ENCODE measurements at regions of chr2 and their contacts with region 1.

Region 1: DNA sequence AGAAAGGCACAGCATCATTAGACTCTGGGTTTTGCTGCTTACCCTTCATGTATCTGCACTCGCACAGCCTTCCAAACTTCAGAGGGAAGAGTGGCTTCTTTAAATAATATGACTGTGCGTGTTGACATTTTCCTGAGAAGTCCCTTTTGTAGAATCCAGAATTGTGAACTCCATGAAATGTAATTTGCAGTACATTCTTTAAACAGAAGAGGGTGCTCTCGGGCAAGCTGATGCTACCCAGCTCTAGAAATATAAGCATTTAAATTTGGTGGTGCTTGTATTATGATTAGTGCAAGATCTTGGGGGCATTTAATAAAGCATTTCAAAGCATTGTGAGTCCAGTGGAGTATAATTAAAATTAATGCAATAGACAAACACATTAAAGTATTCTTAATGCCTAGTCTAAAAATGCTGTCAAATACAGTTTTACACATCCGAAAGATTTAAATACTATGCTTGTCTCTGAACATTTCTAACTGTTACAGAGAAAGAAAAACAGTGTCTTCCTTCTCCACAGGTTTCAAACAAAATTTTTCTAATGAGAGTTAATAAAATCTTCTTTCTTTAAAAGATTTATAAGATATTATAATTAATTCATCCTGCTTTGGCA is 17.3 kb upstream of the GTF2A1L start:
- H3K4me3 Mint-ChIP-seq: no peak overlapping the region
- H3K27ac Mint-ChIP-seq: no peak overlapping the region
- H3K4me1 Mint-ChIP-seq: no peaks in the 10 kb centered on the region
- H3K27me3 Mint-ChIP-seq: no peaks in the 10 kb centered on the region

Region 2: DNA sequence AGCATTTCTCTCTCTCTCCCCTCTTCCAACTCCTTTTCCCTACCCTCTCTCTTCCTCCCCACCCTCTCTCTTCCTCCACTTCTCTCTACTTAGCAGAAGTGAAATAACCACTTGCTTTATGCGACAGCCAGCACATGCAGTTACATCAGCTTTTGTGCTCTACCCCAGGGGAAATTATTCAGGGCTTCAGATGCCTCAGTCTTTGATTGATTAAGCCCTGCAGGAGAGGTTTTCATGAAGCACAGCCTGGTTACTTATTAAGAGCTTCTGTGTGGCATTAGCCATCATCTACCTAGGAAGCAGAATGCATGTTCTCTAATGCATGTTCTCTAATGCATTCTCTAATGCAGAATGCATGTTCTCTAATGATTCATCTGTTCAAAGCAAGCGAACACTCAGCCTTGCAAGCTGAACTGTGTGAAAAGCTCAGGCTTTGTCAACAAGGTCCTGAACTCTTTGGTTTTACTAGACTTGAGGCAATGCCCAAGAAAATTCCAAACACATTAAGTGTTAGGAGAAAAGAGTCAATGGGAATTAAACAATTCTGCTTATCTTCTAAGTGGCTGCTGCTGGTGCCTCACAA is 99.1 kb after region 1 on chr2:
- intact Hi-C with region 1: no loop called
- H3K4me3 Mint-ChIP-seq: no peak overlapping the region
- H3K27ac Mint-ChIP-seq: no peak overlapping the region
- H3K4me1 Mint-ChIP-seq: no peaks in the 10 kb centered on the region
- H3K27me3 Mint-ChIP-seq: no peaks in the 10 kb centered on the region

Region 3: DNA sequence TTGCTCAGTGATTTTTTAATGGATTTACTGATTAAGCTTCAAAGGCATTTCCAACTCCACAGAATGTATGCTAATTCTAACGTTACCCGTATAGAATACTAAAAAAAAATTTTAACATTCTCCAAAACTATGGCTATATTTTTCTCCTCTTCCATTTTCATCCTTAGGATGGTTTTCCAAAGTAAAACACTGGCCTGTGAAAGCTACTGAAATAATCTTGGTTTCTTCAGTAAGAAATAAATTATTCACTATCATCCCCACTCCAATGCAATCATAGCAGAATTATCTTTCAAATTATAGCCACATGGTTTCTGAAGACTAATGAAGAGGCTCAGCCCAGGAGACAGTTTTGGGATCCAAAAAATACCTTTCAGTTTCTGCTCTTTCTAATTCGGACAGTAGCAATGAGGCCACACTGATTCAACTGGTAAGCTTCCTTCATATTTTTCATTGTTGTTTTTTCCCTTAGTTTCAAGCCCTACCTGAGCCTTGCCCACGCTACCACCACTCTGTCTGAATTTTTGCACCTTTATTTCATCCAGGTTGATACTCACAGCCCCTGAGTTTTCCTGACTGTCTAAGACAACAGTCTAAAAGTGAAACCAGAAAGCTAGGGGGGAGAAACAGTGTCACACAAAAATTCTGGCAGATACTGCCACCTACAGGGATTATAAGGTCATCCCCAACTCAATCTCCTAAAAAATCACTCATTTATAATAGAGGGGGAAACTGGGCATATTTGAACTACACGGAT is 1543.7 kb after region 1 on chr2:
- intact Hi-C with region 1: loop called (anchors 5 kb)
- H3K4me3 Mint-ChIP-seq: peak overlapping the region; percentile 70
- H3K27ac Mint-ChIP-seq: no peak overlapping the region
- H3K4me1 Mint-ChIP-seq: peaks cover 5% of the 10 kb centered on the region
- H3K27me3 Mint-ChIP-seq: no peaks in the 10 kb centered on the region

Region 4: GRCh38 chr2:50492477-50492851 is 1892.2 kb after region 1 on chr2:
- intact Hi-C with region 1: loop called (anchors 2 kb)
- H3K4me3 Mint-ChIP-seq: no peak overlapping the region
- H3K27ac Mint-ChIP-seq: no peak overlapping the region
- H3K4me1 Mint-ChIP-seq: no peaks in the 10 kb centered on the region
- H3K27me3 Mint-ChIP-seq: no peaks in the 10 kb centered on the region

Measured in dendritic cell treated with granulocyte-macrophage colony-stimulating factor and Interleukin-4, amounts not matched to agents 40 ng/mL and 50 ng/mL, for 4 days (primary cell).